Lower leg skin (tissue), 4 donors: ENCODE measurements at regions of chr22 and their contacts with region 1.

Region 1: GRCh38 chr22:47713941-47714340 is 951.5 kb downstream of the TBC1D22A start:
- DNase-seq: no peak
- H3K4me3 ChIP-seq: no peak overlapping the region
- CTCF ChIP-seq: no peak
- POLR2A ChIP-seq: no peak

Region 2: DNA sequence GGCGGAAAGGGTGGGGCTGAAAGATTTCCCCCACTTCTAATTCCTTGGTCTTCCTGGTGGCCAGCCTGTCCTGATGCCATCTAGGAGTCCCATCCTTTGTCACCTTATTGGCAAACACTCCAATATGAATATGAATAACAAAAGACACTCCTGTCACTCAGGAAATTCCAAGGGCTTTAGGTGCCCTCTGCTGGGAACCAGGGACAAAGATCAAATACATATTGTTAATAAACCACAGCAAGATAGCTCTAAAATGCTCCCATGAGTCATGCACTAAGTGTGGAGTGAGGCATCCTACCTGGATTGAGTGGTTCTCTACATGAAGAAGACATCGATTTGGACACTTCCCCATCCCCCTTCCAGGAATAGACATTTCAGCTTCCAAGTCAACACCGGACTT is 127.9 kb before region 1 on chr22:
- intact Hi-C with region 1: loop called (anchors 10 kb)
- DNase-seq: no peak
- H3K4me3 ChIP-seq: no peak overlapping the region
- CTCF ChIP-seq: no peak
- POLR2A ChIP-seq: no peak